ENCODE measurements at regions of chrX and their contacts with region 1.

Region 1: GRCh38 chrX:130896802-130897501 is 6.1 kb downstream of the ENOX2 start:
- DNase-seq: no peak
- ATAC-seq: peak; percentile 39 to 66 (median 50)
- H3K4me3 ChIP-seq: no peak overlapping the region
- H3K27ac ChIP-seq: peak overlapping the region in 10 of 12 donors; percentile 27 to 85 (median 54)
- H3K4me1 ChIP-seq: peaks cover 0 to 49% (median 8%) of the 10 kb centered on the region in 12 donors
- H3K27me3 ChIP-seq: no peaks in the 10 kb centered on the region
- CTCF ChIP-seq: no peak
- POLR2A ChIP-seq: no peak

Region 2: DNA sequence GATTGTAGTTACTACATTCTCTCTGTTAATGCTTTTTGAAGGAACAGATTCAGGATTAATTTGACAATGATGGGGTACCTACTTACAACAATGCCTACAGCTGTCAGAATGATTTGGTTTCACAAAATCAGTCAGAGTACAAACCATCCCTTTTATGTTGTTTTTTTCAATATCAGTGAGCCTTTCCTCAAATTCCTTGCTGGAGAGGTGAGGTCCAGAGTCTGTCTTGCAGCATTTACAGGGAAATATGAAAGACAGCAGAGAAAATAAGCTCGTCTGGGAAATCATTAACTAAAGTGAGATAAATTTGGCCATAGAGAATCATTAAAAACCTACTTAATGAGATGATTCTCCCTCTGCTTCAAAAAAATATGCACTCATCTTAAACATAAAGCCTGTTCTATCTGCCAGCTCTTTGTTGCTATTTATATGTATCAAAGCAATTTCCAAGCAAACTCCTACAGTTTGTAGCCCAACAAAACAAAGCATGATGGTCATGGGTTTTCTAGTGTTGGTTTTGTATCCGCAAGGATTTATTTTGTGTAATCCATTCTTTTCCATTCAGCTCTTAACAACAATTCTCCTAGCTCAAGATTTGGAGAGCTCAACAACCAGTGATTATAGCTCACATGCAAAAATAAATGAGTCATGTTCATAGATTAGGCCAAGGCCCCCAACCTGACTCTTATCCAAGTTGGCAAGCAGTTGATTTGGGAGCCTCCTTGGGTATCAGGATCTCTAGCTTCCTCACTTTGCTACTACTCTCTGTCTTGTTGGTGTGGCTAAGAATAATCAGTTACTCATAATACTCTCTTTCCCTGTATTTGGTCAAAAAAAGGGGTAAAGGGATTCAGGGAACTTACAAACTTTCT is 216.6 kb before region 1 on chrX:
- intact Hi-C with region 1: loop called in 1 of 10 experiments (anchors 10 kb)
- DNase-seq: no peak
- ATAC-seq: no peak
- H3K4me3 ChIP-seq: no peak overlapping the region
- H3K27ac ChIP-seq: peak overlapping the region in 2 of 12 donors; percentile 19 to 29
- H3K4me1 ChIP-seq: peaks cover 0 to 6% (median 0%) of the 10 kb centered on the region in 12 donors
- H3K27me3 ChIP-seq: no peaks in the 10 kb centered on the region
- CTCF ChIP-seq: no peak
- POLR2A ChIP-seq: no peak